SK-N-SH (cell line): ENCODE measurements at regions of chr7 and their contacts with region 1.

Region 1: GRCh38 chr7:148527707-148528168 is 62.8 kb upstream of the C7orf33 start:
- DNase-seq: peak; percentile 81
- H3K4me3 ChIP-seq: peak overlapping the region in 1 of 2 experiments; percentile 15; a peak in 1 of 4 replicates
- H3K27ac ChIP-seq: no peak overlapping the region
- H3K4me1 ChIP-seq: no peaks in the 10 kb centered on the region; a peak in 1 of 4 replicates
- H3K27me3 ChIP-seq: no peaks in the 10 kb centered on the region; the same call in 1 of the 2 replicates
- CTCF ChIP-seq: peak; percentile 99
- EP300 ChIP-seq: no peak
- RAD21 ChIP-seq: peak; percentile 85

Region 2: DNA sequence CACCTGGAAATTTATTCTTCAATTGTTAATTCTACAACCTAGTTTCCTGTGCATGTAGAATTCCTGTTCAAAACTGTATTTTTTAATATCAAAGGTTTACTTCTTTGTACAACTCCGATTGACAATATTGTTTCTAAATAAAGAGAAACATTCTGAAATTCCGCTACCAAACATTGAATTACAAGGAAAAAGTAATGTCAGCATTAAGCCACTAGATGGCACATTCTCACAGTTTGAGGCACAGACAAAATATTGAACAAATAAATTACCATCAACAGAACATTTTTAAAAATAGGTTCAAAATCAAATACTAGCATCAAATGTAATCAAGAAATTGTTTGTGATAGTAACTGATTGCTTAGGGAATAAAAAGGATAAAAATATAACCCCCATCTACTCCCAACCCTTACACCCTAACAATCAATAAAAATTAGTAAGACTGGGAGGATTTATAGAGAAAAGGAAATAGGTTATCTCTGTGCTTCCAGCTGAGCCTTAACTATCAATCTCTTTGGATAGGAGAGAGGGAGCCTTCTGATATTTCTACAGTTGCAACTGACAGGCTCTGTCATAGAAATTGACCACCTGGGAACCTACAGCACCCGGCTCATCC is 23.8 kb before region 1 on chr7:
- CTCF ChIA-PET with region 1: interaction called, 36 read pairs
- POLR2A ChIA-PET with region 1: no interaction called
- DNase-seq: peak; percentile 48
- H3K4me3 ChIP-seq: no peak overlapping the region
- H3K27ac ChIP-seq: no peak overlapping the region
- H3K4me1 ChIP-seq: peaks cover 0 to 4% of the 10 kb centered on the region in 2 experiments; a peak in 1 of 4 replicates
- H3K27me3 ChIP-seq: peaks cover 18% of the 10 kb centered on the region; the same call in 1 of the 2 replicates
- CTCF ChIP-seq: peak; percentile 99
- EP300 ChIP-seq: no peak
- RAD21 ChIP-seq: peak; percentile 90

Region 3: GRCh38 chr7:148515716-148516695 is 11.7 kb before region 1 on chr7:
- CTCF ChIA-PET with region 1: interaction called, 20 read pairs
- POLR2A ChIA-PET with region 1: no interaction called
- DNase-seq: no peak
- H3K4me3 ChIP-seq: no peak overlapping the region
- H3K27ac ChIP-seq: no peak overlapping the region
- H3K4me1 ChIP-seq: no peaks in the 10 kb centered on the region
- H3K27me3 ChIP-seq: no peaks in the 10 kb centered on the region
- CTCF ChIP-seq: no peak
- EP300 ChIP-seq: no peak
- RAD21 ChIP-seq: no peak